ENCODE measurements at regions of chr4 and their contacts with region 1.

Region 1: DNA sequence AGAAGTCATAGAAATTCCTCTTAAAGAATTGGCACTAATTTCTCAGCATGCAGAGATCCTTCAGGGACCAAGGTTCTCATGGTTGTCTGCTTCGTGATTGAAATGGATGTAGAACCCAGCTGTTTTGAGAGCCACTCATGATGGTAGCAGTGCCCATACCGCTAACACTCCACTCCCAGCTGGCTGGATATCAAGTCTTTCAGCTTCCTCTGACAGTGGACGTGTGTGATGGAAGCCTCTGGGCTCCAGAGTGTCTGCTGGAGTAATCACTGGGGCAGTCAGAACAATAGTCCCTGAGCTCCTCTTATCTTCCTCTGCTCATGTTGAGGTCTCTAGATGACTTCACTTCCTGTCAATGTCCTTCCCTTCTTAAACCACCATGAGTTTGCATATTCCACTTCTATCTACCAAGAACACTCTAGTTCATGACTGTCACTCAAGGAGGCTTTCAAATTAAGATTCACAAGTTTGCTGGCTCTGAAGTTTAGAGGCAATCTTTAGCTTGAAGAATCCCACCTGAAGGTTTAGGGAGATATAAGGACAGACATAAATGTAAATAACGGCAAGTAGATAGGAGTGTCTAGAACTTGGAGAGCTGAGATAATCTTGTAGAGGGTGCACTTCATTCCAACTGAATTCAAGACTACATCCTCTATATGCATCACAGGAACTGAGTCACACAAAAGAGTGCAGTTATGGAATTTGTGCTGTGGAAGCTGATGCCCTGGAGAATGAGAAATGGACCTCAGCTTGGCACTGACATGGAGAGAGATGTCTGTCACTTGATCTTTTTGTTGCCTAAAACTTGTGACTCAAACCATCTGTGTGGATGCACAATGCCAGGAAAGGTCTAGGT is 64.6 kb upstream of the WDR1 start:
- DNase-seq: peak; percentile 68
- H3K4me3 Mint-ChIP-seq: no peak overlapping the region
- H3K27ac Mint-ChIP-seq: peak overlapping the region; percentile 85
- H3K4me1 Mint-ChIP-seq: peaks cover 32% of the 10 kb centered on the region
- H3K27me3 Mint-ChIP-seq: no peaks in the 10 kb centered on the region

Region 2: GRCh38 chr4:10106421-10107039 is 74.6 kb before region 1 on chr4:
- CTCF ChIA-PET with region 1: no interaction called
- intact Hi-C with region 1: loop called (anchors 2 kb)
- DNase-seq: peak; percentile 92
- H3K4me3 Mint-ChIP-seq: peak overlapping the region; percentile 52
- H3K27ac Mint-ChIP-seq: peak overlapping the region; percentile 90
- H3K4me1 Mint-ChIP-seq: peaks cover 100% of the 10 kb centered on the region
- H3K27me3 Mint-ChIP-seq: no peaks in the 10 kb centered on the region

Region 3: DNA sequence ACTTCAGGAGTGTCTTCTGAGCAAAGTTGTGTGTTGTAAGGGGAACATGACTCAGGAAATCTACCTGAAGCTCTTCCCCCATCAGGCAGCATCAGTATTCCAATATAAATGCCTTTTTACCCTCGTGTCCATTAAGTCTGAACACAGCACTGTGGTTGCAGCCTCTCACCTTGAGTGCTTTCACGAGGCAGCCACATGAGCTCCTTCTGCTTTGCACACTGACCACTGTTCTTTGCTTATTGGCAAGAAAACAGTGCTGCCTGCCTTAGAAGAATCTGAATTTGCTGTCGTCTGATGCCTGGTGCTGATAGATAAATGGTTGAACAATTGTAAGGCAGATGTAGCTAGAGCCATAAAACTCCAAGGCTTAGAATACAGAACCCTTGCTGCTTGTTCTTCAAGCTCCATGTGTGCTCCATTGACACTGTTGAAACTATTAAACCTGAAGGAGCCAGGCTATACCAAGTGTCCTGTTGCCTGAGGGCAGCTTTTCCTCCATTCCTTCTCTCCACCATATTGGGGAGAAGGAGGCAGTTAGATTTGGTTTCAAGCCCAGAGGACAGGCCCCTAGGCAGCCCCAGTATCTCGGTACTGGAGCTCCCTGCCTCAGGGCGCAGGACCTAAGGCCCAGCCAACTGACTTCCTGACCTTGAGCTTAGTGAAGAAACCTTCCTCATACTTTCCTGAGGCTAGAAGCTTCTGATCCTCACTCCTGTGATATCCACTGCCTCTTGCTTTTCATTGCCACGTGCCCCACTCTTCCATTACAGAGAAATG is 75.2 kb after region 1 on chr4:
- CTCF ChIA-PET with region 1: no interaction called
- intact Hi-C with region 1: loop called (anchors 5 kb)
- DNase-seq: no peak
- H3K4me3 Mint-ChIP-seq: no peak overlapping the region
- H3K27ac Mint-ChIP-seq: no peak overlapping the region
- H3K4me1 Mint-ChIP-seq: no peaks in the 10 kb centered on the region
- H3K27me3 Mint-ChIP-seq: no peaks in the 10 kb centered on the region

Region 4: GRCh38 chr4:10461091-10461849 is 280.1 kb after region 1 on chr4:
- CTCF ChIA-PET with region 1: interaction called, 5 read pairs
- intact Hi-C with region 1: loop called (anchors 1 kb)
- DNase-seq: peak; percentile 65
- H3K4me3 Mint-ChIP-seq: peak overlapping the region; percentile 76
- H3K27ac Mint-ChIP-seq: no peak overlapping the region
- H3K4me1 Mint-ChIP-seq: peaks cover 25% of the 10 kb centered on the region
- H3K27me3 Mint-ChIP-seq: peaks cover 32% of the 10 kb centered on the region

Measured in activated naive CD4-positive, alpha-beta T cell treated with anti-CD3 and anti-CD28 coated beads for 36 hours (primary cell).